ENCODE measurements at regions of chr17 and their contacts with region 1.

Region 1: DNA sequence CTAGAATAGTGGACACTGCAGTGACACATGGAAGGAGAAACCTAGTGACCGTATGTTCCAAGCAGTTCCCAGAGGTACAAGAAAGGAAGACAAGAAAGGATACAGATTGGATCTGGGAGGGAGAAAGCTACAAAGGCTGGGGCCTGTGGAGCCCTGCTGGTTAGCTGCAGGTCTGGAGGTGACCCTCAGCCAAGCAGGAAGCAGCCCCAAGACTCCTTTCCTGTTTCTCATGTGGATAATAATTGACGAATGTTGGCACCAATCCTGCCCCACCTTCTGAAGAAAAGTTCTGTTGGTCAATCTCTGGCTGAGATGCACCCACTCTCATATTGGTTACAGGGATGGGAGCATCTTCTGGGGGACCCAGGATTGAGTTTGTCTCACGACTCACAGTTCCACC is 99.8 kb downstream of the SHISA6 start:
- DNase-seq: no peak
- H3K4me3 ChIP-seq: no peak overlapping the region
- H3K27ac ChIP-seq: no peak overlapping the region
- H3K4me1 ChIP-seq: no peaks in the 10 kb centered on the region
- H3K27me3 ChIP-seq: no peaks in the 10 kb centered on the region
- CTCF ChIP-seq: no peak

Region 2: GRCh38 chr17:10415161-10415560 is 925.6 kb before region 1 on chr17:
- CTCF ChIA-PET with region 1: no interaction called
- POLR2A ChIA-PET with region 1: interaction called, 11 read pairs
- intact Hi-C with region 1: no loop called
- DNase-seq: no peak
- H3K4me3 ChIP-seq: no peak overlapping the region
- H3K27ac ChIP-seq: no peak overlapping the region
- H3K4me1 ChIP-seq: no peaks in the 10 kb centered on the region
- H3K27me3 ChIP-seq: no peaks in the 10 kb centered on the region
- CTCF ChIP-seq: no peak

Region 3: DNA sequence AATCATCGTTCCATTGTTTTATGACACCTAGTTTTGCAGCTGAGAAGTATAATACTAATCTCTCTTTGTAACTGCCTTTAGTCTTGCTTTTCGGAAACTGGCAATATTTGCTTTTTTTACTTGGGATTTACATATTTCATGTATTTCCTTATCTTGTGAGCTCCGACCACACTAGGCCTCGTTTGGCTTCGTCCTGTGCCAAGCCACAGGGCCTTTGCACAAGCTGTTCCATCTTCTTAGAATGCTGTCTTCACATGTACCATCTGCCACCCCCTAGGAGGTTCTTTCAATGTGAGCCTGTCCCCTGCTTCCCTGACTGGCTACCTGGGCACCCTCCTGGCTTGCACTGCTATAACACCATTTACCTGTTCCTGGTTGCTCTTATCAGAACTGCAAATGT is 22.6 kb before region 1 on chr17:
- CTCF ChIA-PET with region 1: no interaction called
- POLR2A ChIA-PET with region 1: no interaction called
- intact Hi-C with region 1: no loop called
- DNase-seq: no peak
- H3K4me3 ChIP-seq: no peak overlapping the region
- H3K27ac ChIP-seq: no peak overlapping the region
- H3K4me1 ChIP-seq: no peaks in the 10 kb centered on the region
- H3K27me3 ChIP-seq: no peaks in the 10 kb centered on the region
- CTCF ChIP-seq: no peak